Ascending aorta (tissue), 2 donors: ENCODE measurements at regions of chr18 and their contacts with region 1.

Region 1: DNA sequence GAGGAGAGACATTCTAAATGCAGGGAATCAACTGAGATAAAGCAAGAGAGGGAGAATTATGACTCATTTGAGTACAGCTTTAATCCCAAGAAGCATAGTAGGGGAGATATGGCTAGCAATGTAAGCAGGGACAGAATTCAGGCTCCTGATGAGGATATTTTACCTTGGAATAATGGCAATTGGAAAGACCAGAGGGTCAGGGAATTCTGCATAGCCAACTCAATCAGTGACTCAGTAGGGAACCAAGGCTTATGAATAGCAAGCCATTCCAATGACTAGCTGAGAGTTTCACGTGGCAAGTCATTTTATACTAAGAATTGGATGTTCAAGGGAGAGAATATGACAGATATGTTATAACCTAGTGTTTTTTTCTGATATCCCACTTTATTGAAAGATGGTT is 563.8 kb upstream of the NETO1 start:
- DNase-seq: no peak
- H3K4me3 ChIP-seq: no peak overlapping the region
- H3K27ac ChIP-seq: no peak overlapping the region
- H3K4me1 ChIP-seq: no peaks in the 10 kb centered on the region
- H3K27me3 ChIP-seq: no peaks in the 10 kb centered on the region
- CTCF ChIP-seq: no peak

Region 2: DNA sequence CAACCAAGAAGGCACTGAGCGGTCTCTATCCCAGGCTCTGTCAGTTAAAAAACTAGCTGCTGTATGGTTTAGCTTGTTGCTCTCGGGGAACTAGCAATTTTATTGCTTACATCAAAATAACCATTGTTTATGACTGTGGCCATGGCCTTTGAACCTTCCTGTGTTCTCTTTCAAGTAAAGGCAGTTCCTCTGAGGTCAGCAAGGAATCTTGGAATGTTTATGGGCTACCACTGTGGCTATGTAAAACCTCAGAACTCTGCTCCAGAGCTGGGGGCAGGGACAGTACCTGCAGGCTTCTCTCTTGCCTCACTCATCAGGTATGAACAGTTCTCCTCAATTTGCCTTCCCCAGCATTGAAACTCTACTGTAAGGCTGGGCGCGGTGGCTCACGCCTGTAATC is 147.8 kb before region 1 on chr18:
- intact Hi-C with region 1: no loop called
- DNase-seq: no peak
- H3K4me3 ChIP-seq: no peak overlapping the region
- H3K27ac ChIP-seq: no peak overlapping the region
- H3K4me1 ChIP-seq: no peaks in the 10 kb centered on the region
- H3K27me3 ChIP-seq: no peaks in the 10 kb centered on the region
- CTCF ChIP-seq: no peak

Region 3: GRCh38 chr18:73365018-73365417 is 66.6 kb before region 1 on chr18:
- intact Hi-C with region 1: loop called (anchors 10 kb)
- DNase-seq: no peak
- H3K4me3 ChIP-seq: no peak overlapping the region
- H3K27ac ChIP-seq: no peak overlapping the region
- H3K4me1 ChIP-seq: no peaks in the 10 kb centered on the region
- H3K27me3 ChIP-seq: no peaks in the 10 kb centered on the region
- CTCF ChIP-seq: no peak